T-cell (primary cell): ENCODE measurements at regions of chr11 and their contacts with region 1.

Region 1: DNA sequence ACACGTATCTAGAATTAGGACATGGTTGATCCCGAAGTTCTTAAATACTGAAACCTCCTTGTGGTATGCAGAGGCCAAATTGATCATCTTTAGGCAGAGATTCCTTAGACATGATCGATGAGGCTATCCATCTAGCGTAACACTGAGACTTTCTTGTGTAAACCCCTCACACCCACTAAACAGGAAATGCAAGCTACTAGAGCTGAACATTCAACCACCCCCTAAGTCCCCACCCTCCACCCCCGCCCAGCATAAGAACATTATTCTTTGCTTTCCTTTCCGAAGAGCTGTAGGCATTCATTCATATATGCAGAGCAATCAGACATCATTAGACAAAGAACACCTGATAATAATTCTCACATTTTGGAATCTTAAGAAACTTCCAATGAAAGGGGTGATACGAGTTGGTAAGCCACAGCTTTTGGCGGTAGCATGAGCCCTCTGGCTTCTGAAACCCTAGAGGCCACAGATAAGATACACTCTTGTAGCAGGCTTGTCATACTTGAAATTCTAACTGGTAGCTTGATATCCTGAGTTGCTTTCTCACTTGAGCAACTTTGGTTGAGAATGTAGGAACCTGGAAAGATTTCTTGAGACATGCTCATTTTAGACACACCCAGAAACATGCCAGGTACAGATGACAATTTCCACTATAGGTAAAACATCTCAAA is 42.2 kb downstream of the FLI1 start:
- DNase-seq: peak in 1 of 35 experiments; percentile 55
- ATAC-seq: peak; percentile 56 to 67 (median 58)
- H3K4me3 ChIP-seq: no peak overlapping the region
- H3K4me3 Mint-ChIP-seq: peak overlapping the region; percentile 64 to 82 (median 65)
- H3K27ac ChIP-seq: peak overlapping the region; percentile 49
- H3K27ac Mint-ChIP-seq: peak overlapping the region; percentile 95
- H3K4me1 ChIP-seq: peaks cover 87 to 94% of the 10 kb centered on the region in 2 experiments
- H3K4me1 Mint-ChIP-seq: peaks cover 98 to 100% (median 99%) of the 10 kb centered on the region in 3 donors
- H3K27me3 ChIP-seq: no peaks in the 10 kb centered on the region
- H3K27me3 Mint-ChIP-seq: no peaks in the 10 kb centered on the region

Region 2: DNA sequence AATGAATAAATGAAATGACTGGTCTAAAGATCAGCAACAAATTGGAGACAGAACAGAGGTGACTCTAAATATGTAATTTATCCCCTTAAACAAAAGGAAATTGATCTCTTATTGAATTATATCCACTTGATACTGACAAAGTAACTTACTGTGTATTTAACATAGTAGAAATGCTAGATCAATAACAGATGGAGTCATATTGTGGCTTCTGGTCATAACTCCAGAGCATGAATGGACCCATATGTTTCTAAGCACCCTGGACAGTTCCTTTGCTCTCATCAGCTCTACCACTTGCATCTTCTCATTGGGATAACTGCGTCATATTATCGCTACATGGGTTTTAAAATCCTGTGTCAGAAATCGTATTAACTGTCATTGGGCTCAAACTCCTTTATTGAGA is 371.0 kb before region 1 on chr11:
- CTCF ChIA-PET with region 1: no interaction called
- POLR2A ChIA-PET with region 1: no interaction called
- DNase-seq: peak in 1 of 35 experiments; percentile 61
- ATAC-seq: peak in 1 of 4 experiments; percentile 34
- H3K4me3 ChIP-seq: no peak overlapping the region
- H3K4me3 Mint-ChIP-seq: no peak overlapping the region
- H3K27ac ChIP-seq: no peak overlapping the region
- H3K27ac Mint-ChIP-seq: no peak overlapping the region
- H3K4me1 ChIP-seq: peaks cover 3 to 6% of the 10 kb centered on the region in 2 experiments
- H3K4me1 Mint-ChIP-seq: peaks cover 18 to 33% (median 24%) of the 10 kb centered on the region in 3 donors
- H3K27me3 ChIP-seq: no peaks in the 10 kb centered on the region
- H3K27me3 Mint-ChIP-seq: no peaks in the 10 kb centered on the region

Region 3: GRCh38 chr11:128720522-128720985 is 15.5 kb before region 1 on chr11:
- CTCF ChIA-PET with region 1: interaction called, 4 to 11 read pairs
- POLR2A ChIA-PET with region 1: interaction called, 4 read pairs
- DNase-seq: peak in 27 of 35 experiments; percentile 19 to 66 (median 41)
- ATAC-seq: peak; percentile 40 to 56 (median 51)
- H3K4me3 ChIP-seq: peak overlapping the region; percentile 4 to 14
- H3K4me3 Mint-ChIP-seq: peak overlapping the region; percentile 70 to 82 (median 76)
- H3K27ac ChIP-seq: peak overlapping the region; percentile 77
- H3K27ac Mint-ChIP-seq: peak overlapping the region; percentile 98 to 100
- H3K4me1 ChIP-seq: peaks cover 86 to 100% of the 10 kb centered on the region in 2 experiments
- H3K4me1 Mint-ChIP-seq: peaks cover 98 to 100% (median 100%) of the 10 kb centered on the region in 3 donors
- H3K27me3 ChIP-seq: no peaks in the 10 kb centered on the region
- H3K27me3 Mint-ChIP-seq: peaks cover 0 to 1% of the 10 kb centered on the region in 2 donors

Region 4: DNA sequence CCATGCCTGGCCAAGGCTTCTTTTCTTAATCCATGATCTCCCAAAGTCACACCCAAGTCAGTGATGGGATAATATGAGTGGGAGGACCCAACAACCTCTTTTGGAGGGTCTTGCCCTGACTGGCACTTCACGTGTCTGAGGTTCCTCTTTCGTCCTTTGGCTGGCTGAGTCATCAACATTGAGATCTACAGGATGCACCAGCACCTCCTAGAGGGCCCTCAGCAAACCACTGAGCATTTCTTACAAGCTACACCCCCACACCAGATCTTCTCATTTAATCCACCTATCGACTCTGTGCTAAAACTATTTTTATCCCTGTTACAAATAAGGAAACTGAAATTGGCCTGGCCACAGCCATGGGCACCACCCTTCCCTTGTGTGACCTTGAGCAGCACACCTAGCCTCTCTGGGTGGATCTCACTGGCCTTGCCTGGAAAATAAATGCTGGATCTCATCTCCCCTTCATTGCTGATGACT is 21.2 kb after region 1 on chr11:
- CTCF ChIA-PET with region 1: interaction called, 5 to 15 read pairs
- POLR2A ChIA-PET with region 1: interaction called, 4 to 7 read pairs
- DNase-seq: peak; percentile 15 to 86 (median 66)
- ATAC-seq: peak; percentile 90 to 98 (median 91)
- H3K4me3 ChIP-seq: no peak overlapping the region
- H3K4me3 Mint-ChIP-seq: peak overlapping the region in 1 of 3 donors; percentile 62
- H3K27ac ChIP-seq: peak overlapping the region; percentile 33
- H3K27ac Mint-ChIP-seq: peak overlapping the region; percentile 82 to 90
- H3K4me1 ChIP-seq: peaks cover 29 to 63% of the 10 kb centered on the region in 2 experiments
- H3K4me1 Mint-ChIP-seq: peaks cover 85 to 87% (median 85%) of the 10 kb centered on the region in 3 donors
- H3K27me3 ChIP-seq: no peaks in the 10 kb centered on the region
- H3K27me3 Mint-ChIP-seq: no peaks in the 10 kb centered on the region

Region 5: DNA sequence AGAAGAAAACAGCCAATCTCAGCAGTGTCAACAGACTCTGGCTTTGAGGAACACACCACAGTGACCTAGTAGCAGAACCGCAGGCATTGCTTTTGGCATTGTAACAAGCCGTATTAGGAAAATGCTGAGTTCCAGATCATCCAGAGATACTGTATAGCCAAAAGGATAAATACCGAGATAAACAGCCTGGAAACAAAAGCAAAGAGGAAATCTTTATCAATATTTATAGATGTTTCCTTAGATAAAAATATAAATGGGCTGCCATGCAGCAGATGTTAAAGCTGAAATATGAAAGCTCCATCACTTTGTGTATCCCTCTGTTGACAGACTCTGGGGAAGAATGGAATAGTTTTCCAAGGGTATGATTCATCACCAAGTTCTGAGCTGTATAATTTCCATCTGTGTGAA is 305.5 kb after region 1 on chr11:
- CTCF ChIA-PET with region 1: no interaction called
- POLR2A ChIA-PET with region 1: no interaction called
- DNase-seq: no peak
- ATAC-seq: no peak
- H3K4me3 ChIP-seq: no peak overlapping the region
- H3K4me3 Mint-ChIP-seq: no peak overlapping the region
- H3K27ac ChIP-seq: no peak overlapping the region
- H3K27ac Mint-ChIP-seq: no peak overlapping the region
- H3K4me1 ChIP-seq: no peaks in the 10 kb centered on the region
- H3K4me1 Mint-ChIP-seq: no peaks in the 10 kb centered on the region
- H3K27me3 ChIP-seq: no peaks in the 10 kb centered on the region
- H3K27me3 Mint-ChIP-seq: no peaks in the 10 kb centered on the region

Region 6: DNA sequence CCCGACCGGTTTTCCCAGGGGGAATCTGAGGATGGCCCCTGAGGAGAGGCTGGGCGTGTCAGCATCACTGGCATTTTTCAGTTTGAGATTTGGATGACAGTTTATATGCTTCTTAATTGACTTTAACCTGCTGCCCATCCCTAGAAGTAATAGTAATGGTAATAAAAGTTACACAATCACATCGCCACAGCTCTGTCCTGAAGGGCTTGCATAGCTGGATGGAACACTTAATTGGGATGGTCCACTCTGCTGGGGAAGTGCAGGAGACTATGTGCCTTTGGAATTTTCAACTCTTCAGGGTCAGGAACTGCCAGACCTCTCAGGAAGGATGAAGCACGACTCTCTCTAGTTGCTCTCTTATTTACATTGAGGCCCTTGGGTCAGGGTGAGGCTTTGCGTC is 655.8 kb after region 1 on chr11:
- CTCF ChIA-PET with region 1: no interaction called
- POLR2A ChIA-PET with region 1: no interaction called
- DNase-seq: no peak
- ATAC-seq: no peak
- H3K4me3 ChIP-seq: no peak overlapping the region
- H3K4me3 Mint-ChIP-seq: no peak overlapping the region
- H3K27ac ChIP-seq: no peak overlapping the region
- H3K27ac Mint-ChIP-seq: no peak overlapping the region
- H3K4me1 ChIP-seq: no peaks in the 10 kb centered on the region
- H3K4me1 Mint-ChIP-seq: no peaks in the 10 kb centered on the region
- H3K27me3 ChIP-seq: no peaks in the 10 kb centered on the region
- H3K27me3 Mint-ChIP-seq: peaks cover 30 to 36% of the 10 kb centered on the region in 2 donors